ENCODE measurements at regions of chr14 and their contacts with region 1.

Region 1: GRCh38 chr14:75088574-75089373 is 19.3 kb downstream of the ZC2HC1C start:
- DNase-seq: peak in 5 of 7 donors; percentile 47 to 72 (median 67)
- H3K4me3 ChIP-seq: no peak overlapping the region
- H3K27ac ChIP-seq: no peak overlapping the region
- H3K4me1 ChIP-seq: no peaks in the 10 kb centered on the region
- H3K27me3 ChIP-seq: no peaks in the 10 kb centered on the region
- CTCF ChIP-seq: peak; percentile 54 to 90 (median 82)
- POLR2A ChIP-seq: no peak

Region 2: DNA sequence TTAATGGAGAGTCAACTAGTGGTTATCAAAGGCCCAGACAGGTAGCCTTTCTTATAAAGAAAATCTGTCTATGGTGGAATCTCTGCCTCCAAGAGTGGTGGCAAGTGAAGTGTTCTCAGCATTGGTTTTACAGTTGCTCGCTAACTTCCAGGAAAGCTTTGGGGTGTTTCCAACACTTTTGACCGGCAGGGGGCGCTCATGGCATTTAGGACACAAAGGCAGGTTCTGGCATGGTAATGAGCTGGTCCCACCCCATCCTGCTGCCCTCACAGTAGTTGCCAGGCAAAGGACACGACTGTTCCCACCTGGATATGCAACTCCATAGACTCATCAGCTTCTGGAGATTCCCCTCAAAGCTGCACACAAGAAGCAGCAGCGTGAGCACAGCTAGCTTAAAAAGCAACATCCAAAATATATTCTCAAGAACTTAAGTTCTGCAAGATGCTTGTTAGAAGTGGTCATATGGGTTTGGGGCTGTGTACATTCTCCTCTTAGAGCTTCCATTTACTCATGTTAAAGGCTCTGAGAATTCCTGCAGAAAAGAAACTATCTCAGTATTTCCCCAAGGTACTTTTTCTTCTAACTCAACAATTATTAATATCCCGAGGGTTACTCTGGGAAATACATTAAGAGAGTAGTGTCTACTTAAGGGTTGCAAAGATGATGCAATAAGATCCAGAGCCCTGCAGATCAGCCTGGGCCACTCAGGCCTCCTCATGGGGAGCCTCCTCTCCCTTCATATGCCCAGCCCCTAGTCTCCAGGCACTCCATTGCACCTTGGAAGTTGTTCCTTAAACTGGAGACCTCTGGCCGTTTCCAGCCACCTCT is 227.7 kb before region 1 on chr14:
- intact Hi-C with region 1: loop called in 1 of 2 experiments (anchors 5 kb)
- DNase-seq: peak; percentile 84 to 98 (median 92)
- H3K4me3 ChIP-seq: no peak overlapping the region
- H3K27ac ChIP-seq: no peak overlapping the region
- H3K4me1 ChIP-seq: no peaks in the 10 kb centered on the region
- H3K27me3 ChIP-seq: no peaks in the 10 kb centered on the region
- CTCF ChIP-seq: peak; percentile 78 to 88 (median 82)
- POLR2A ChIP-seq: no peak

Region 3: GRCh38 chr14:74913986-74914573 is 174.7 kb before region 1 on chr14:
- intact Hi-C with region 1: loop called in 1 of 2 experiments (anchors 10 kb)
- DNase-seq: peak; percentile 64 to 87 (median 81)
- H3K4me3 ChIP-seq: no peak overlapping the region
- H3K27ac ChIP-seq: peak overlapping the region in 1 of 5 donors; percentile 49
- H3K4me1 ChIP-seq: peaks cover 0 to 7% of the 10 kb centered on the region in 2 donors
- H3K27me3 ChIP-seq: no peaks in the 10 kb centered on the region
- CTCF ChIP-seq: peak; percentile 53 to 80 (median 70)
- POLR2A ChIP-seq: no peak

Region 4: DNA sequence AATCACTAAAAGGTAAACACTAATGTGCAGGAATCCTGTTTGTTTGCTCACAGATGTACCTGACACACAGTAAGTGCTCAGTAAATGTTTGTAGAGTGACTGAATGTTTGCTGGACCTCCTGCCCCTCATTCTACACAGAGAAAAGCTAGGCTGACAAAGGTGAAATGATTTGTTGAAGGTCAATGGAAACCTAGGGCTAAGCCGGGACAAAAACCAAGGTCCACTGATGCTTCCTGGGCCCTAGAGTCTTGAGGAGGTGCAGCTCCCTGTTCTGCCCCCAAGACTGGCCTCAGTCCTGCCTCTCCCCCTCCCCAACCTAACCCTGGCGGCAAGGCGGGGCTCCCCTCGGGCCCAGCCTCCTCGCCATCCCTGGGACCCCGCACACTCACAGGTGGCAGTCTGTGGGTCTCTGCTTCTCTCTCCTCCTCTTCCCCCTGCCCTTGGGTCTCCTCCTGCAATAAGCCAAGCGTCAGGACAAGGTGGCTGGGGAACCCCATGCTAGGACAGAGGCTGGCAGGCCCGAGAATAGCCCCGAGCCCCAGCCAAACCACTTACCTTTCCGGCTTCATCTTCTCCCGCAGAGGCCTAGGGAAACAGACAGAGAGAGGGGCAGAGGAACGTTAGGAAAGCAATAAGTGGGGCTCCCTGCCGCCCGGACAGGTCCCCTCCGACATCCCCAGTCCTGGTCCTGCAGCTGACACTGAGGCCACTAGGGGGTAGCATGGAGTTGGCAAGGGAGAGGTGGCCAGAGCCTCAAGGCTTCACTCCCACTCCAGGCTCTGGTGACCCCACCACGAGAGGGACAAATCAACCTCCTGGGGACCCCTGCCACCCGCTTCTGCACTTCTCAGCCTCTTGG is 142.7 kb before region 1 on chr14:
- intact Hi-C with region 1: loop called (anchors 5 kb)
- DNase-seq: peak; percentile 72 to 88 (median 82)
- H3K4me3 ChIP-seq: no peak overlapping the region
- H3K27ac ChIP-seq: no peak overlapping the region
- H3K4me1 ChIP-seq: peaks cover 3 to 16% of the 10 kb centered on the region in 2 donors
- H3K27me3 ChIP-seq: no peaks in the 10 kb centered on the region
- CTCF ChIP-seq: peak; percentile 72 to 94 (median 90)
- POLR2A ChIP-seq: no peak

Measured in adrenal gland (tissue), 19 donors.